KBM-7 (cell line): ENCODE measurements at regions of chr15 and their contacts with region 1.

Region 1: DNA sequence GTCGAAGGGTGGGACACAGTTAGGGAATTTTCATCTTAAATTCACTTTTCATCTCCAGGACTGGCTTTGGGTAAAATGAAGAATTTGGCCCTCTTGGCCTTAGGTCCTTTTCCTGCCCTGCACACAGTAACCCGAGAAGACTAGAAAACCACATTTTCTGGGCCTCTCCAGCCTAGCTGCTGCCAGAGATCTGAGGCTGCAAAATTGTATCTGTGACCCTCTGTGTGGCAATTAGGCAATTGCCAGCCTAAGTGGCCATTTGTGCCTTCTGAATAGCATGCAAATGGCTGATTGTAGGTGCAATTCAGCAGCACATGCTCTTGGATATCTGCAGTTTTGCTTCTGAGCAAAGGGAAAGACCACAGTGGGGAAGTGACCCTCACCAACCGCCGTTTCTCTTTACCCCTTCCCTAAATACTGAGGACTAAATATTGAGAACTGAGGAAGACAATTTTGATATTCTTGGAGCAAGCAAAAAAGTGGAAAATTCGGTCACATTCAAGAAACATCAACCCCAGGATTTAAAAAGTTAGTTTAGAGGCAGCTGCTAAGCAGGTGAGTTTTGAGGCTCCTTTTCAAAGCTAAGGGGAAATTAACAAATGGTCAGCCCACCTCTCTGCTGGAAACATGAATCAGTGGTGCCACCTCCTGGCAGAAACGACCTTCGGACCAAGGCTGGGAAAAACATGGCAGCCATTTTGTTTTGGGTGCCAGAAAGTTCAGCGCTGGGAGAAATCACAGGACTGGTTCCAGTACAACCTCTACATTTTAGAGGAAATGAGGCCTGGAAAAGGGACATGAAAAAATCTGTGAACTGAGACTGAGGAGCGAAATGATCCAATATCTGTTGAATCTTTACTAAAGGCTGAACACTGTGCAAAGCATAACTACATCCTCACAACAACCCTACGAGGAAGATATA is 56.6 kb upstream of the PRTG start:
- DNase-seq: peak; percentile 85

Region 2: GRCh38 chr15:55649054-55649423 is 150.5 kb before region 1 on chr15:
- in situ Hi-C with region 1: loop called (anchors 10 kb)
- DNase-seq: no peak

Region 3: DNA sequence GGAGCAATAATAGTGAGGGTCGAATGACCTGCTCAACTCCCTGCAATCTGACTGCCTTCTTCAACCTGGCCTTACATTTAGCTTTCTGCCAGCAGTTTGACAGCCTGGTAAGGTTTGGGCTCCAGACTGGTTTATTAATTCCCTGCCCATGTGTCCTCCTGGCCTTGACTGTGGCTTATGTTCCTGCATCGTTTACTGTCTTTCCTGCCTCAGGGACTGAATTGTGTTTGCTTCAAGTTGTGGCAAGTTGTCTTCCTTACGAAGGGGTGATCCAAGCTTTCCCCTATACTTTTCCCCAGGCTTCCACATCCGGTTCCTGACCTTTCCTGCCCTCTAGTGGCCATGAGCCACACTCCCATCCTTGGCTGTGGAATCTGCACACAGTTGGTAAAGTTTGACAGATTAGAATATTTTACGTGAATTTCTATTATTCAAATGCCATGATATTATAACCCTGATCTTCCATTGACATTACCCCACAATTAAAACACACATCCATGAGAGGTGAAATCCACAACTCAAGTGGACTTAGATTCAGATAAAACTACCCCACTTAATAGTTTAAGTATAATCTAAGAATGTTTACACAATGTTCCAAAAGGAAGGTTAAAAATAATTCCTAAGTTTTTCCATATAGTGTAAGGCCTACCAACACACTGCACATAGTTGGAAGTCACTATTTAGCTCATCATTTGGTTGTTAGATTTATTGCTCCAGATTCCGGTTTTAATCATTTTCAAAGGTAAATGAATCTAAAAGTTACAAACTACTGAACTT is 98.2 kb after region 1 on chr15:
- in situ Hi-C with region 1: no loop called
- DNase-seq: peak; percentile 56

Region 4: GRCh38 chr15:56052395-56053045 is 253.0 kb after region 1 on chr15:
- in situ Hi-C with region 1: no loop called
- DNase-seq: peak; percentile 57